Transverse colon (tissue), 4 donors: ENCODE measurements at regions of chr14 and their contacts with region 1.

Region 1: DNA sequence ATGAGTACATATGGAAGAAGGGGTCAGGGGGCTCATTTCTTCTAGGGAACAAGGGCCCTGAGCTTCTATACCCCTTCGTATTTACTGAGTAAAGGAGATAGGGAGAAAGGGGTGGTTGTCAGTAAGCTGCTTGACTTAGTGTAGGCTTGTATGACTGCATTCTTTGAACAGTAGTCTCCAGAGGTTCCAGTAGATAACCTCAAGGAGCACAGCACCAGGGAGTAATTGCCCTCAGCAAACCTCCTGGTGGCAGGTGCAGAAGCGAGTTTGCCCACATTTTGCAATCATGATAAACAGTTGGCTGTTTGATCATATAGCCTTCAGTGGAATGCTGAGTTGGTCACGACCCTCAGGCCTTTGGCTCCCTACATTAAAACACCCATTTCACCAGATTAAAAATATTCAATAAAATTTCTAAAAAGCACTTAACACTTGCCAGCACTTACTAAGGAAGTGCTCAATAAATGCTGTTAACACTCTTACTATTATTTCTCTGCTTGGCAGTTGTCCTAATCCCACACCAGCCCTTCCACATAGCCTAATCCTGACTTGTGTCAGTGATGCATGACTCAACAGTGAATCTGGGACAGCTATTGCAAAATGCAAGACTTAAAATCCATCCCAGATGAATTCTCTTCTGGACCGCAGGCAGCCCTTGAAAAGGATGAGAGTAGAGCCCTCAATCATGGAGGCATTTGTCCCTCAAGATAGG is 3.7 kb upstream of the DHRS4L2 start:
- DNase-seq: no peak
- H3K4me3 ChIP-seq: no peak overlapping the region
- H3K27ac ChIP-seq: peak overlapping the region in 1 of 4 donors; percentile 42
- H3K4me1 ChIP-seq: peaks cover 4 to 40% (median 23%) of the 10 kb centered on the region in 4 donors
- H3K27me3 ChIP-seq: no peaks in the 10 kb centered on the region
- CTCF ChIP-seq: no peak
- EP300 ChIP-seq: no peak
- POLR2A ChIP-seq: no peak

Region 2: DNA sequence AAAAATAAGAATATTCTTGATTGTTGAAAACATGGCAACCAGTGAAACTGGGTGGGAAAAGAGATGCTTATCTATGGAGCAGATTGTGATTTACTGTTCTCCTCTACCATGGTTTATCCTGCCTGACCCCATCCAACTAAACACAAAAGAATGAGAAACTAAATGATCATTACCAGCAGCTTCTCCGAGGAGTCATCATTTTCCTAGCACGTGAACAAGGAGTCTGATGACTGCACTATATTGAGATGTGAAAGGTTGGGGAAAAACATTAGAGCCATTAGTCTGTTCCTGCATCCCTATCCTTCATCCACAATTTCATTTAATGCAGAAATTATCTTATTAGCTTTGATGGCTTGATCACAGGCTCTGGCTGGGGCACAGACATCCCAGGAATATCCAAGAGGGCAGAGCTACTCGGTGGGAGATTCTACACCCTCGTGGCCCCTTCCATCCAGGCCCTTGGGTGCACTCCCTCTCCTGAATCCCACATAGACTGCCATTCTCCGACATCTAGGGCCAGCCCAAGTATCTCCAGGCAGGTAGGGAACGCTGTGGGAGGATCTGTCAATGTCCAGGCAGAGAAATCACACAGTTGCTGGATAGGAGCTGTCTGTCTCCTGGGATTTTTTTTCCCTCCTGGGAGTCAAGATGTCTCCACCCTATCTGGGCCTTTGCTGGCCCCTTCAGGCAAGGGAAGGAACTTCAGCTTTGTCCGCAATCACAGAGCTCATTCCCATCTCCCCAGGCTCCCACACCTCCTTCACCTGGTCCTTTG is 74.8 kb before region 1 on chr14:
- in situ Hi-C with region 1: no loop called
- intact Hi-C with region 1: no loop called
- DNase-seq: peak; percentile 54
- H3K4me3 ChIP-seq: no peak overlapping the region
- H3K27ac ChIP-seq: no peak overlapping the region
- H3K4me1 ChIP-seq: no peaks in the 10 kb centered on the region
- H3K27me3 ChIP-seq: no peaks in the 10 kb centered on the region
- CTCF ChIP-seq: peak; percentile 61 to 77 (median 74)
- EP300 ChIP-seq: no peak
- POLR2A ChIP-seq: no peak

Region 3: DNA sequence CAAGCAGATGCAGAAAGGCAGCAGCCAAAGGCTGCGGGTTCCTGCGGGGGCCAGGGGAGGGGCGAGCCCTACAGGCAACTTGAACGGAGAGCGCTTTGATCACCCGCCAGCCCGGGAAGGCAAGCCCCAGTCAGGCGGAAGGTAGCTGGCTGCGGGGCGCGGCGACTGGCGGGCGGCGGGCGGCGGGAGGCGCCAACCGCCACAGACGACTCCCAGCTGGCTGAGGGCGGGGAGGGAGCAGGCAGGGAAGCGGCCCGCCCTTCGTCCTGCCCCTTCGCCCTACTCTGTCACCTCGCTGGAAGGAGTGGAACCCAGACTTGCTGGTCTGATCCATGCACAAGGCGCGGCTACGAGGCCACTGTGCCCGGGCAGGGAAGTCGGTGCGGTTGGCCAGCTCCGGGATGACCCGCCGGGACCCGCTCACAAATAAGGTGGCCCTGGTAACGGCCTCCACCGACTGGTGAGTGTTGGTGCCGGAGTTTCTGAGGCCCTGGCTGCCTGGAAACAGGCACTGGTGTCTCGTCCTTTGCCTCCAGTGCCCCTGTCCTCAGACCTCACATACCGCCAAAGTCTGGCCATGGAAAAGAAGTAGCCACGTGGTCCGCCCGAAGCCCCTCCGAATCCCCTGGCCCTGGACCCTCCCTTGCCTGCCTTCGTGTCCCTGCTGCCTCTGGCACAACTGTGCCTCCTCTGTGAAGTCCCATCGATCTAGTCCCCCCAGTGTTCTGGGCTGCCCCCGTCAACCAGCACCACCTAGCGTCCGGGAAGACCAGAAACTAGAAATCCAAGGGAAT is 51.3 kb after region 1 on chr14:
- in situ Hi-C with region 1: loop called in 1 of 4 experiments (anchors 5 kb)
- intact Hi-C with region 1: no loop called
- DNase-seq: peak; percentile 92
- H3K4me3 ChIP-seq: peak overlapping the region; percentile 49 to 62 (median 58)
- H3K27ac ChIP-seq: peak overlapping the region; percentile 91 to 97 (median 95)
- H3K4me1 ChIP-seq: peaks cover 0 to 21% (median 7%) of the 10 kb centered on the region in 4 donors
- H3K27me3 ChIP-seq: no peaks in the 10 kb centered on the region
- CTCF ChIP-seq: peak; percentile 76 to 85 (median 77)
- EP300 ChIP-seq: no peak
- POLR2A ChIP-seq: peak; percentile 77

Region 4: DNA sequence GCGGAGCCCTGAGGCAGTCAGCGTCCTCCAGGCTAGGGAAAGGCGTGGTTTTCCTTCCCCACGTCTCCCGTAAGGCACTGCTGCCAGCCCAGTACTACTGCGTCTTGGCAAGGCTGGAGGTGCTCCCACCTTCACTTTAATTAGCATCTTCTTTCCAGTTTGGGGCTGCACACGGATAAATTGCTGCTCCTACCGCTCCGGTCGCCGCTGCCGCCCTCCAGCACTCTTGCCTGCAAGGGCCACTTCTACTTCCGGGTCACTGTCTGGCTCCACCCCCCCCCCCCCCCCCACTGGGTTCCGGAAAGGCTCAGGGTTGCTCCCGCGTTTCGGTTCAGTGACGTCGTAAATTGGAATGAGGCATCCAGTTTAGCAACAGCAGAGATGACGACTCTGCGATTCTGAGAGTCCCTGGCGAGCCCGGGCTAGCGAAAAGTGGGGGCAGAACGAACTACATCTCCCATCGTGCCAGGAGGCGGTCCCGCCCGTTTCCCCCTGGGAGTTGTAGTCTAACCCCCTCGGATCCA is 247.1 kb after region 1 on chr14 and contains the start of gene NEDD8:
- in situ Hi-C with region 1: no loop called
- intact Hi-C with region 1: no loop called
- DNase-seq: peak; percentile 93
- H3K4me3 ChIP-seq: peak within 1 kb of the TSS; percentile 55 to 87 (median 74)
- H3K27ac ChIP-seq: peak within 1 kb of the TSS; percentile 86 to 96 (median 92)
- H3K4me1 ChIP-seq: peaks cover 16 to 29% (median 23%) of the 10 kb centered on the region in 4 donors
- H3K27me3 ChIP-seq: no peaks in the 10 kb centered on the region
- CTCF ChIP-seq: no peak
- EP300 ChIP-seq: no peak
- POLR2A ChIP-seq: peak; percentile 69
- total RNA-seq, gene NEDD8: 42.2 to 113 (median 69.9) TPM

Region 5: DNA sequence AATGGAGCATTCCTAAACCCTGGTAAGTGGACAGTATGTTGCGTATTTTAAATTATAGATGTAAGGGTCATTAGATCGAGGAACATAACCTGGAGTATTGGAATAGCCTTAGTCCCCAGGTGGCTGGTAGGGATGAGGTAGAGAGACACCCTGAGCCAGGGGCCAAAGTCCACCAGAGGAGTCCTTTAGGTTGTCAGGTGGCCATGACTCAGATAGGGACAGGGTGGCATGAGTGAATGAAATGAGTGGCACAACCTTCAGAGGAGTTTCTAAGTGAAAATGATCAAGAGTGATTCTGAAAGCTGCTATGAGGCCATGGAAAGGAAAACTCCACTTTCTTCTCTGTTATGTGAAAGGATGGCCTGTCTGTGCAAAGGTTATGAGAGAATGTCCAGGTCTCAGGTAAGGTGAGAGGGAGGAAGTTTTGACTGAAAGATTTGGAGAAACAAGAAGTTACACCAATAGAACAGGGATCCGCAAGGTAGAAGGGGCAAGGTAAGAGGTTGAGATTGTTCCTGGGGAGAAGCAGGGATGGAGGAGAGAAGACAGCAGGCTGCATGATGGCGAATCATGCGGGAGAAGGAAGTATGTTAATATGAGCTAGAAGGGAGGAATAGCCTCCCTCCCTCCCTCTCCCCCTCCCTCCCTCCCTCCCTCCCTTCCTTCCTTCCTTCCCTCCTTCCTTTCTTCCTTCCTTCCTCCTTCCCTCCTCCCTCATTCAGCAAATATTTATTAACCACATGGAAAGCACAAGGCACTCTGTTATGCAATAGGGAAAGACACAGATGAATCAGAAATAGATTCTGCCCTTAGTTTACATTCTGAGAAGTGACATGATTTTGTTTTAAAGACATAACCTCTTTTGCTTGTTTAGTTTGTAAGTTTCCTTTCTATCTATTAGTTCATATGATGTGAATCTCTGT is 368.8 kb after region 1 on chr14:
- in situ Hi-C with region 1: no loop called
- intact Hi-C with region 1: no loop called
- DNase-seq: peak; percentile 65
- H3K4me3 ChIP-seq: no peak overlapping the region
- H3K27ac ChIP-seq: peak overlapping the region in 3 of 4 donors; percentile 50 to 62 (median 61)
- H3K4me1 ChIP-seq: peaks cover 0 to 15% (median 0%) of the 10 kb centered on the region in 4 donors
- H3K27me3 ChIP-seq: peaks cover 4% of the 10 kb centered on the region
- CTCF ChIP-seq: no peak
- EP300 ChIP-seq: no peak
- POLR2A ChIP-seq: no peak

Region 6: DNA sequence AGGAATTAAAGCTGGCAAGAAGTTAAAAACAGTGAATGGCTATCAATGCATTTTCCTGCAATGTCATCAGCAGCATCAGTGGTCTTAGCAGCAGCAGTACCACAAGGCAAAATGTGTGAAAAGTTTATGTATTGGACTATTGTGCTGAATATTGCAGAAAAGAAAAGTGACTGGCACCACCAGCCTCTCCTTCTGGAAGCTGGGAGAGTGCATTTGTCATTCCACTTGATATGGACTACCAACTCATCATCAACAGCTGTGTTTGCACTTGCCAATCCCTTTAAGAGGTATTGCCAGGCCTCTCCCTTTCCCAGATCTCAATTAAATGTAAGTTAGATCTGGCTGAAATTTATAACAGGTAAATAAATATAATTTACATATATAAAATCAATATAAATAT is 799.9 kb after region 1 on chr14:
- in situ Hi-C with region 1: no loop called
- intact Hi-C with region 1: no loop called
- DNase-seq: no peak
- H3K4me3 ChIP-seq: no peak overlapping the region
- H3K27ac ChIP-seq: no peak overlapping the region
- H3K4me1 ChIP-seq: peaks cover 0 to 11% (median 3%) of the 10 kb centered on the region in 4 donors
- H3K27me3 ChIP-seq: no peaks in the 10 kb centered on the region
- CTCF ChIP-seq: no peak
- EP300 ChIP-seq: no peak
- POLR2A ChIP-seq: no peak